CD4-positive, alpha-beta memory T cell (primary cell): ENCODE measurements at regions of chr1 and their contacts with region 1.

Region 1: GRCh38 chr1:31831397-31832378 is 15.9 kb upstream of the SPOCD1 start:
- DNase-seq: no peak
- H3K4me3 ChIP-seq: no peak overlapping the region
- H3K4me3 Mint-ChIP-seq: no peak overlapping the region
- H3K27ac ChIP-seq: no peak overlapping the region
- H3K27ac Mint-ChIP-seq: peak overlapping the region in 2 of 7 donors; percentile 13 to 27
- H3K4me1 ChIP-seq: peaks cover 27% of the 10 kb centered on the region
- H3K4me1 Mint-ChIP-seq: peaks cover 24 to 36% (median 27%) of the 10 kb centered on the region in 4 donors
- H3K27me3 ChIP-seq: no peaks in the 10 kb centered on the region
- H3K27me3 Mint-ChIP-seq: no peaks in the 10 kb centered on the region

Region 2: DNA sequence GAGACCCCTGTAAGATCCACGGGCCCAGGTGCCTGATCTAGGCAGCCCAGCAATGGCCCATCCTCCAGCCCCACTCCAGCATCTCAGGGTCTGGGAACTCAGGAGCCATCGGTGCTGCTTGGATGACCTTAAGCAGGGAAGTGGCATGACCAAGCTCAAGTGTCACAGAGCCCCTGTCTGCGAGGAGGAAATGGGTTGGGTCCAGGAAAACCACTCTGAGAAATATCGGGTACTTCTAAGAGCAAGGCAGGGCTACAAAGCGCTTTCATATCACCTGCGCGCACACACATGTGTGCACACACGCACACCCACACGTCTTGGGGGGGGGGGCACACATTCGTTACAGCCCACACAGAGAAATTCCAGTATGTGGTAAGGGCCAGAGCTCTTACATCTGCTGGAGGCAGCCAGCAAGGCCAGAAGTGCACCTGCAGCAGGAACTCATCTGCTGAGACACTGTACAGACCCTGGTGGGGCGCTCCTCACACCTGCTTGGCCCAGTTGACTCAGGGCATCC is 16.8 kb after region 1 on chr1:
- CTCF ChIA-PET with region 1: interaction called, 6 read pairs
- POLR2A ChIA-PET with region 1: interaction called, 23 read pairs
- intact Hi-C with region 1: loop called (anchors 1 kb)
- DNase-seq: peak; percentile 47 to 66 (median 65)
- H3K4me3 ChIP-seq: peak overlapping the region; percentile 7 to 51
- H3K4me3 Mint-ChIP-seq: peak overlapping the region; percentile 61 to 88 (median 78)
- H3K27ac ChIP-seq: peak overlapping the region; percentile 16
- H3K27ac Mint-ChIP-seq: peak overlapping the region; percentile 65 to 96 (median 90)
- H3K4me1 ChIP-seq: peaks cover 48% of the 10 kb centered on the region
- H3K4me1 Mint-ChIP-seq: peaks cover 43 to 62% (median 51%) of the 10 kb centered on the region in 4 donors
- H3K27me3 ChIP-seq: no peaks in the 10 kb centered on the region
- H3K27me3 Mint-ChIP-seq: no peaks in the 10 kb centered on the region

Region 3: GRCh38 chr1:31861346-31861745 is 29.7 kb after region 1 on chr1:
- CTCF ChIA-PET with region 1: no interaction called
- POLR2A ChIA-PET with region 1: no interaction called
- intact Hi-C with region 1: no loop called
- DNase-seq: no peak
- H3K4me3 ChIP-seq: no peak overlapping the region
- H3K4me3 Mint-ChIP-seq: no peak overlapping the region
- H3K27ac ChIP-seq: no peak overlapping the region
- H3K27ac Mint-ChIP-seq: peak overlapping the region in 1 of 7 donors; percentile 9
- H3K4me1 ChIP-seq: peaks cover 5% of the 10 kb centered on the region
- H3K4me1 Mint-ChIP-seq: peaks cover 0 to 2% (median under 1%) of the 10 kb centered on the region in 4 donors
- H3K27me3 ChIP-seq: no peaks in the 10 kb centered on the region
- H3K27me3 Mint-ChIP-seq: peaks cover 0 to 1% of the 10 kb centered on the region in 2 donors

Region 4: GRCh38 chr1:31910933-31911332 is 79.2 kb after region 1 on chr1:
- CTCF ChIA-PET with region 1: interaction called, 5 read pairs
- POLR2A ChIA-PET with region 1: no interaction called
- intact Hi-C with region 1: loop called (anchors 5 kb)
- DNase-seq: no peak
- H3K4me3 ChIP-seq: no peak overlapping the region
- H3K4me3 Mint-ChIP-seq: peak overlapping the region in 4 of 8 donors; percentile 7 to 22 (median 20)
- H3K27ac ChIP-seq: peak overlapping the region; percentile 37
- H3K27ac Mint-ChIP-seq: peak overlapping the region; percentile 0 to 86 (median 69)
- H3K4me1 ChIP-seq: peaks cover 50% of the 10 kb centered on the region
- H3K4me1 Mint-ChIP-seq: peaks cover 33 to 53% (median 45%) of the 10 kb centered on the region in 4 donors
- H3K27me3 ChIP-seq: no peaks in the 10 kb centered on the region
- H3K27me3 Mint-ChIP-seq: no peaks in the 10 kb centered on the region